H1 (cell line): ENCODE measurements at regions of chr2 and their contacts with region 1.

Region 1: GRCh38 chr2:68925295-68925896 is 27.3 kb downstream of the GKN2 start:
- DNase-seq: no peak
- H3K4me3 ChIP-seq: no peak overlapping the region
- H3K27ac ChIP-seq: no peak overlapping the region
- H3K4me1 ChIP-seq: no peaks in the 10 kb centered on the region; a peak in 1 of 7 replicates
- H3K27me3 ChIP-seq: no peaks in the 10 kb centered on the region
- CTCF ChIP-seq: peak in 2 of 3 experiments; percentile 86 to 88; a peak in 3 of 4 replicates
- EP300 ChIP-seq: no peak
- POLR2A ChIP-seq: no peak
- RAD21 ChIP-seq: peak; percentile 95 to 96

Region 2: GRCh38 chr2:68715353-68716041 is 209.9 kb before region 1 on chr2:
- CTCF ChIA-PET with region 1: interaction called, 28 read pairs
- POLR2A ChIA-PET with region 1: no interaction called
- DNase-seq: peak; percentile 80 to 81
- H3K4me3 ChIP-seq: no peak overlapping the region
- H3K27ac ChIP-seq: no peak overlapping the region
- H3K4me1 ChIP-seq: no peaks in the 10 kb centered on the region
- H3K27me3 ChIP-seq: no peaks in the 10 kb centered on the region
- CTCF ChIP-seq: peak; percentile 84 to 90 (median 87)
- EP300 ChIP-seq: no peak
- POLR2A ChIP-seq: no peak
- RAD21 ChIP-seq: peak; percentile 81 to 85

Region 3: GRCh38 chr2:68742626-68743415 is 182.6 kb before region 1 on chr2:
- CTCF ChIA-PET with region 1: interaction called, 18 read pairs
- POLR2A ChIA-PET with region 1: no interaction called
- DNase-seq: peak in 1 of 2 experiments; percentile 10
- H3K4me3 ChIP-seq: no peak overlapping the region
- H3K27ac ChIP-seq: no peak overlapping the region
- H3K4me1 ChIP-seq: peaks cover 0 to 4% (median 0%) of the 10 kb centered on the region in 4 experiments; a peak in 1 of 7 replicates
- H3K27me3 ChIP-seq: no peaks in the 10 kb centered on the region; a peak in 1 of 7 replicates
- CTCF ChIP-seq: no peak
- EP300 ChIP-seq: no peak
- POLR2A ChIP-seq: no peak
- RAD21 ChIP-seq: no peak

Region 4: GRCh38 chr2:68807821-68808266 is 117.6 kb before region 1 on chr2:
- CTCF ChIA-PET with region 1: no interaction called
- POLR2A ChIA-PET with region 1: no interaction called
- DNase-seq: no peak
- H3K4me3 ChIP-seq: no peak overlapping the region
- H3K27ac ChIP-seq: no peak overlapping the region
- H3K4me1 ChIP-seq: no peaks in the 10 kb centered on the region
- H3K27me3 ChIP-seq: no peaks in the 10 kb centered on the region
- CTCF ChIP-seq: no peak
- EP300 ChIP-seq: no peak
- POLR2A ChIP-seq: no peak
- RAD21 ChIP-seq: no peak

Region 5: DNA sequence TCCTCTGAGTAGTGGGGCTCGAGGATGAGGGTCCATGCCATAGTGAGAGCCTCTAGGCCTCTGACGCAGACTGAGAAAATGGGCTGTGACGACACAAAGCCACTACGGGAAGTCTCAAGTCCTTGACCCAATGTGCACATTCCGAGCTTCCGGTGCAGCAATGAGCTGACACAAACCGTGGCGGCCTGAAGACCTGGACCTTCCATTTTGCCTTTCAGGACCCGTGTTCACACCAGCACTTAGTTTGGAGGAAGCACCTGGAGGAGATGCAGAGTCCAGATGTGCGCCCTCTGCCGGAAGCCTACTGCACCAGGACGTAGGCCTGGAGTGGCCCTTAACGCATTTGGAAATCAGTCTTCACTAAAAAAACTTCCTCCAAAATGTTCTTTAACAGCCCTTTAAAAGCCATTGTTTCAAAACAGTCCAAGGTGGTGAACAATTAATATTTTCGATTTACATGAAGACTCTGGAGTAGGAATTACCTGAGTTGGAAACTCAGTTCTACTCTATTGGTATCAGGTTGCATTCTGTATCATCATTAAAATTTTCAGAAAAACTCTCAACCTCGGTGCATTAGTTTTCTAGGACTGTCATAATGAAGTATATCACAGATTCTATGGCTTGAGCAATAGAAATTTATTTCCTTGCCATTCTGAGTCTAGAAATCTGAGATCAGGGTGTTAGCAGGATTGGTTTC is 88.1 kb before region 1 on chr2:
- CTCF ChIA-PET with region 1: interaction called, 25 read pairs
- POLR2A ChIA-PET with region 1: no interaction called
- DNase-seq: peak; percentile 38 to 84
- H3K4me3 ChIP-seq: no peak overlapping the region
- H3K27ac ChIP-seq: no peak overlapping the region
- H3K4me1 ChIP-seq: no peaks in the 10 kb centered on the region
- H3K27me3 ChIP-seq: no peaks in the 10 kb centered on the region
- CTCF ChIP-seq: peak; percentile 78 to 91 (median 85)
- EP300 ChIP-seq: no peak
- POLR2A ChIP-seq: no peak
- RAD21 ChIP-seq: peak; percentile 62 to 75

Region 6: GRCh38 chr2:68943581-68944568 is 18.5 kb after region 1 on chr2:
- CTCF ChIA-PET with region 1: interaction called, 39 read pairs
- POLR2A ChIA-PET with region 1: no interaction called
- DNase-seq: peak in 1 of 2 experiments; percentile 88
- H3K4me3 ChIP-seq: peak overlapping the region; percentile 42 to 60 (median 50); a peak in 6 of 8 replicates
- H3K27ac ChIP-seq: no peak overlapping the region
- H3K4me1 ChIP-seq: peaks cover 0 to 6% (median 5%) of the 10 kb centered on the region in 4 experiments; a peak in 3 of 7 replicates
- H3K27me3 ChIP-seq: no peaks in the 10 kb centered on the region
- CTCF ChIP-seq: peak; percentile 17 to 76 (median 76)
- EP300 ChIP-seq: no peak
- POLR2A ChIP-seq: no peak
- RAD21 ChIP-seq: peak; percentile 56 to 79